ENCODE measurements at regions of chr1 and their contacts with region 1.

Region 1: DNA sequence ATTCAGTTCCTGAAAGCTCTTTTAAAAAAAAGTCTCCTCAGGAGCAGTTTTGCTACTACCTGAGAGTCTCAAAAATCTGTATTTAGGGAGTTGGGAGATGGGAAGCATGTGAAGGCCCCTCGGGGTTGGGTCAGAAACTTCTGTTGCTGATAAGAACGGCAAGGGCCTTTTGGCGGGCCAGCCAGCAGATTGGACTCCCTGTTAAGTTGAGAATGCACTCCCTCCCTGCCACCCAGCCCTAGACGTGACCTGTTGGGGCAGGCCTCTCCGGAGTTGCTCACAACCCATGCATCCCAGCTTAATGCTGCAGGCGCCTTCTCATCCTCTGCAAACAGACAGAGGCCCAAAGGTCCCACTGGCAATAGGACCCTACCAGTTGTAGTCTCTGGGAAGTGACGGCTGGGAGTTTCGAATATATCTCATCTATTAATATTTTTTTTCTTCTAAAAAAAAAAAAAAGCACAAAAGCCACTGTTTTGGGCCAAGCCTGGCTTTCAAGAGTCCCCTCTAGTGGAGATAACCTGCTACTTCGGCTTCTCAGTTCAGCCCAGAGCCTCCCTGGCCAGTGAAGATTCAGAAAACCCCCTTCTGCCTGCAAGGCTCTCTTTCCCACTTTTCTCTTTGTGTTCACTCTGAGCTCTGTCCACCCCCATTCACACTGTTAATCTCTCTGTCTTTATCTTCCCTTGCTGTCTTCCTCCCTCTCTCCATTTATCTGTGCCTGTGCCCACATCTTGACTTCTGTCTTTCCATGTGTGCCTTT is 5.3 kb downstream of the PLXNA2 start:
- DNase-seq: peak; percentile 93
- H3K4me3 Mint-ChIP-seq: no peak overlapping the region
- H3K27ac Mint-ChIP-seq: peak overlapping the region; percentile 81
- H3K4me1 Mint-ChIP-seq: peaks cover 60% of the 10 kb centered on the region
- H3K27me3 Mint-ChIP-seq: no peaks in the 10 kb centered on the region
- CTCF ChIP-seq: peak; percentile 98

Region 2: GRCh38 chr1:208071435-208072031 is 167.4 kb before region 1 on chr1:
- CTCF ChIA-PET with region 1: interaction called, 18 read pairs
- POLR2A ChIA-PET with region 1: interaction called, 4 read pairs
- intact Hi-C with region 1: no loop called
- DNase-seq: no peak
- H3K4me3 Mint-ChIP-seq: no peak overlapping the region
- H3K27ac Mint-ChIP-seq: no peak overlapping the region
- H3K4me1 Mint-ChIP-seq: no peaks in the 10 kb centered on the region
- H3K27me3 Mint-ChIP-seq: no peaks in the 10 kb centered on the region
- CTCF ChIP-seq: no peak

Region 3: GRCh38 chr1:208107425-208108212 is 131.3 kb before region 1 on chr1:
- CTCF ChIA-PET with region 1: interaction called, 336 read pairs
- POLR2A ChIA-PET with region 1: interaction called, 18 read pairs
- intact Hi-C with region 1: loop called (anchors 1 kb)
- DNase-seq: peak; percentile 100
- H3K4me3 Mint-ChIP-seq: peak overlapping the region; percentile 28
- H3K27ac Mint-ChIP-seq: peak overlapping the region; percentile 69
- H3K4me1 Mint-ChIP-seq: peaks cover 47% of the 10 kb centered on the region
- H3K27me3 Mint-ChIP-seq: no peaks in the 10 kb centered on the region
- CTCF ChIP-seq: no peak

Region 4: GRCh38 chr1:208192995-208193394 is 45.9 kb before region 1 on chr1:
- CTCF ChIA-PET with region 1: interaction called, 1,037 read pairs
- POLR2A ChIA-PET with region 1: interaction called, 18 read pairs
- intact Hi-C with region 1: no loop called
- DNase-seq: peak; percentile 75
- H3K4me3 Mint-ChIP-seq: no peak overlapping the region
- H3K27ac Mint-ChIP-seq: no peak overlapping the region
- H3K4me1 Mint-ChIP-seq: peaks cover 30% of the 10 kb centered on the region
- H3K27me3 Mint-ChIP-seq: no peaks in the 10 kb centered on the region
- CTCF ChIP-seq: no peak

Region 5: DNA sequence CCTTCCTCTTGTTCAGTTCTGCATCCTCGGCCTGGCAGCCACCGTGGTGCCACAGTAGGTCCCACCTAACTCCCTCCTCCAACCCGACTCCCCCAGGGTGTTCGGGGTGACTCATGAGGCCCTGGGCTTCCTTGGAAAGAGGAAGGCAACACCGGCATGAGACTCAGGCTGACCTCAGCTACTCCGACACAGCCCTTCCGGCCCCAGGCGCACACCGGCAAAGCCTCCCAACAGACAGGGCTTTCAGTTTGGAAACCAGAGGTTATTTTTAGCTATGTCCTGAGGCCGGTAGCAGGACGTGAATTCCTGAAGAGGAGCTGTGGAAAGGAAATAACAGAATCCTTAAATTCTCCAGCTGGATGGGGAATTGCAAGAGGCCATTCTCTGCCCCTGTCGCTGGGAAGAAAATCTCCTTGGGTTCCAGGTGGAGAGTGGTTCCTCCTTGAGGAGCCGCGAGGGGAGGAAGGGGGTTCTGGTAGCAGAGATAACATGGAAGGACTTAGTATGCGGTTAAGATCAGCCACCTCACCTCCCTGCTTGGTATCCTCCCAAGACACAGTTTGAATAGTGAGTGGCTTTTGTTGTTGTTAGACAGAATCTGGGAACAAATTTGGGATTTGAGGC is 19.1 kb before region 1 on chr1:
- CTCF ChIA-PET with region 1: interaction called, 545 read pairs
- POLR2A ChIA-PET with region 1: interaction called, 186 read pairs
- intact Hi-C with region 1: loop called (anchors 2 kb)
- DNase-seq: peak; percentile 98
- H3K4me3 Mint-ChIP-seq: peak overlapping the region; percentile 57
- H3K27ac Mint-ChIP-seq: peak overlapping the region; percentile 97
- H3K4me1 Mint-ChIP-seq: peaks cover 60% of the 10 kb centered on the region
- H3K27me3 Mint-ChIP-seq: no peaks in the 10 kb centered on the region
- CTCF ChIP-seq: no peak

Measured in MCF 10A (cell line).